ENCODE measurements at regions of chr11 and their contacts with region 1.

Region 1: GRCh38 chr11:112280268-112281126 is 19.8 kb upstream of the PLET1 start:
- DNase-seq: peak; percentile 83
- ATAC-seq: peak; percentile 91
- H3K4me3 ChIP-seq: peak overlapping the region; percentile 24
- H3K27ac ChIP-seq: no peak overlapping the region
- H3K4me1 ChIP-seq: peaks cover 2% of the 10 kb centered on the region
- H3K27me3 ChIP-seq: 0 out of 2 replicates have a peak, but pooled peaks cover 7% of the 10 kb centered on the region
- CTCF ChIP-seq: peak; percentile 85
- POLR2A ChIP-seq: no peak
- RAD21 ChIP-seq: peak; percentile 87

Region 2: DNA sequence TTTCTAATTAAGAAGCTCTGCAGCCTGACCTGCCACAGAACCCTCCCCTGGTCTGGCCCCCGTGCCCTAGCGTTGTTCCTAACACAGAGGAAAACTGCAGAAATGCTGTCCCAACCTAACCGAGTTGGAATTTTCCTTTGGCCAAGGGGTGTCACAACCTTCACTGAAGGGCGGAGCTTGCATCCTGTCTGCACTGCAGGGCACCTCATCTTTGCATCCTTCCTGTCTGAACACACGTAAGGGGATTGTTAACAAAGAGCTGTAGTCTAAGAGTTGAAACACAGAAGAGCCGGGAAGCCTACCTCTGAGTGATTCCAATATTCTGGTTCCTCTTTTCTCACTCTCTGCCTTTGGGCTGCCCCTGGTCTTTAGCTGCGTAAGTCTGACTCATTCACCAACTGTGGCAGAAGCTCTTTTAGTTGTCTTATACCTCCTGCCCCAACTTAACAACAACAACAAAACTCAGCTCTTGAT is 341.8 kb before region 1 on chr11:
- CTCF ChIA-PET with region 1: no interaction called
- POLR2A ChIA-PET with region 1: no interaction called
- dilution Hi-C with region 1: no loop called
- in situ Hi-C with region 1: no loop called
- intact Hi-C with region 1: loop called (anchors 5 kb)
- DNase-seq: peak; percentile 63
- ATAC-seq: peak; percentile 40
- H3K4me3 ChIP-seq: peak overlapping the region; percentile 1; the same call in 1 of the 2 replicates
- H3K27ac ChIP-seq: peak overlapping the region; percentile 53
- H3K4me1 ChIP-seq: peaks cover 28% of the 10 kb centered on the region
- H3K27me3 ChIP-seq: no peaks in the 10 kb centered on the region
- CTCF ChIP-seq: no peak
- POLR2A ChIP-seq: peak; percentile 44; the same call in 1 of the 2 replicates
- RAD21 ChIP-seq: no peak

Region 3: GRCh38 chr11:112113539-112114457 is 166.7 kb before region 1 on chr11:
- CTCF ChIA-PET with region 1: interaction called, 10 read pairs
- POLR2A ChIA-PET with region 1: no interaction called
- dilution Hi-C with region 1: no loop called
- in situ Hi-C with region 1: loop called (anchors 10 kb)
- intact Hi-C with region 1: loop called (anchors 1 kb)
- DNase-seq: peak; percentile 69
- ATAC-seq: peak; percentile 84
- H3K4me3 ChIP-seq: no peak overlapping the region
- H3K27ac ChIP-seq: no peak overlapping the region
- H3K4me1 ChIP-seq: no peaks in the 10 kb centered on the region
- H3K27me3 ChIP-seq: no peaks in the 10 kb centered on the region
- CTCF ChIP-seq: peak; percentile 69
- POLR2A ChIP-seq: no peak
- RAD21 ChIP-seq: peak; percentile 75

Region 4: GRCh38 chr11:112226062-112226830 is 54.3 kb before region 1 on chr11 and contains the start of gene PTS:
- CTCF ChIA-PET with region 1: interaction called, 64 read pairs
- POLR2A ChIA-PET with region 1: interaction called, 5 read pairs
- dilution Hi-C with region 1: no loop called
- in situ Hi-C with region 1: loop called (anchors 5 kb)
- intact Hi-C with region 1: no loop called
- DNase-seq: peak; percentile 82
- ATAC-seq: peak; percentile 94
- H3K4me3 ChIP-seq: peak within 1 kb of the TSS; percentile 93
- H3K27ac ChIP-seq: peak within 1 kb of the TSS; percentile 98
- H3K4me1 ChIP-seq: peaks cover 16% of the 10 kb centered on the region
- H3K27me3 ChIP-seq: no peaks in the 10 kb centered on the region
- CTCF ChIP-seq: no peak
- POLR2A ChIP-seq: peak; percentile 93
- RAD21 ChIP-seq: no peak
- total RNA-seq, gene PTS: 21.0 and 63.6 TPM in 2 replicates

Region 5: GRCh38 chr11:112265721-112266409 is 14.6 kb before region 1 on chr11:
- CTCF ChIA-PET with region 1: interaction called, 13 read pairs
- POLR2A ChIA-PET with region 1: no interaction called
- dilution Hi-C with region 1: no loop called
- in situ Hi-C with region 1: no loop called
- intact Hi-C with region 1: no loop called
- DNase-seq: peak; percentile 34
- ATAC-seq: peak; percentile 84
- H3K4me3 ChIP-seq: no peak overlapping the region
- H3K27ac ChIP-seq: no peak overlapping the region
- H3K4me1 ChIP-seq: peaks cover 12% of the 10 kb centered on the region
- H3K27me3 ChIP-seq: no peaks in the 10 kb centered on the region
- CTCF ChIP-seq: no peak
- POLR2A ChIP-seq: no peak
- RAD21 ChIP-seq: no peak

Region 6: GRCh38 chr11:112459001-112459400 is 178.5 kb after region 1 on chr11:
- CTCF ChIA-PET with region 1: no interaction called
- POLR2A ChIA-PET with region 1: no interaction called
- dilution Hi-C with region 1: no loop called
- in situ Hi-C with region 1: no loop called
- intact Hi-C with region 1: no loop called
- DNase-seq: no peak
- ATAC-seq: no peak
- H3K4me3 ChIP-seq: 0 out of 2 replicates have a peak overlapping the region, but pooled peaks have one; percentile 6
- H3K27ac ChIP-seq: no peak overlapping the region
- H3K4me1 ChIP-seq: no peaks in the 10 kb centered on the region
- H3K27me3 ChIP-seq: no peaks in the 10 kb centered on the region
- CTCF ChIP-seq: no peak
- POLR2A ChIP-seq: no peak
- RAD21 ChIP-seq: no peak

Region 7: GRCh38 chr11:113289431-113290187 is 1009.1 kb after region 1 on chr11:
- CTCF ChIA-PET with region 1: interaction called, 6 read pairs
- POLR2A ChIA-PET with region 1: no interaction called
- dilution Hi-C with region 1: no loop called
- in situ Hi-C with region 1: loop called (anchors 10 kb)
- intact Hi-C with region 1: no loop called
- DNase-seq: peak; percentile 38
- ATAC-seq: peak; percentile 91
- H3K4me3 ChIP-seq: no peak overlapping the region
- H3K27ac ChIP-seq: no peak overlapping the region
- H3K4me1 ChIP-seq: peaks cover 6% of the 10 kb centered on the region; the same call in 1 of the 2 replicates
- H3K27me3 ChIP-seq: peaks cover 8% of the 10 kb centered on the region; the same call in 1 of the 2 replicates
- CTCF ChIP-seq: peak; percentile 89
- POLR2A ChIP-seq: no peak
- RAD21 ChIP-seq: peak; percentile 92